ENCODE measurements at regions of chr5 and their contacts with region 1.

Region 1: DNA sequence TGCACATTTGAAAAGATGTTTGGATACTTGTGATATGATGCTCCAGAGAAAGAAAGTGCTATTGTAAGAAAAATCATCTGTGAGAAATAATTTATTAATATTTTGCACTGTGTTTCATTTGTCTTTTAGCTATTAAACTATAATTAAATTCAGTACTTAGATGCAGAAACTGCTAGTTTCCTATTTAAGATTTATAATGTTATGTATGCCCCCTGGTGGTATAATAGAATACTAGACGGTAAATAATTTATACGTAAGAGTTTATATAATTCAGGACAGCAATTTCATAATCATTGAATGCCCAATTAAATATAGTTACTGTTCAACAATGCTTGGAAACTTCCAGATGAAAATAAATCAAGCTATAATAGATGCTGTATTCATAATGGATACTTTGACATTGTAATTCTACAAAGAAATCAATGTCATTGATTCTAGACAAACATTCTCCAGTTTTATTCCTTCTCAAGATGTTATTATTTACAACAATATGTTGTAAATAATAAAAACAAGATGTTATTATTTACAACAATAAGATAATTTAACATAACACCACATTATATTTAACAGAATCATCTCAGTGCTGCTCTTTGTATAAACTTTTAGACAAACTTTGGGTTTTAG is 101.0 kb downstream of the TMEM232 start:
- DNase-seq: peak in 1 of 2 experiments; percentile 39
- H3K4me3 ChIP-seq: no peak overlapping the region
- H3K27ac ChIP-seq: no peak overlapping the region
- H3K4me1 ChIP-seq: no peaks in the 10 kb centered on the region
- H3K27me3 ChIP-seq: no peaks in the 10 kb centered on the region
- CTCF ChIP-seq: peak; percentile 74; the same call in 1 of the 2 replicates

Region 2: GRCh38 chr5:110409571-110409970 is 215.9 kb before region 1 on chr5:
- CTCF ChIA-PET with region 1: no interaction called
- POLR2A ChIA-PET with region 1: no interaction called
- intact Hi-C with region 1: no loop called
- DNase-seq: no peak
- H3K4me3 ChIP-seq: no peak overlapping the region
- H3K27ac ChIP-seq: no peak overlapping the region
- H3K4me1 ChIP-seq: no peaks in the 10 kb centered on the region
- H3K27me3 ChIP-seq: no peaks in the 10 kb centered on the region
- CTCF ChIP-seq: no peak

Region 3: GRCh38 chr5:110441035-110441434 is 184.5 kb before region 1 on chr5:
- CTCF ChIA-PET with region 1: no interaction called
- POLR2A ChIA-PET with region 1: no interaction called
- intact Hi-C with region 1: loop called (anchors 10 kb)
- DNase-seq: no peak
- H3K4me3 ChIP-seq: no peak overlapping the region
- H3K27ac ChIP-seq: no peak overlapping the region
- H3K4me1 ChIP-seq: no peaks in the 10 kb centered on the region
- H3K27me3 ChIP-seq: no peaks in the 10 kb centered on the region
- CTCF ChIP-seq: peak; percentile 49; the same call in 1 of the 2 replicates